ENCODE measurements at regions of chr3 and their contacts with region 1.

Region 1: DNA sequence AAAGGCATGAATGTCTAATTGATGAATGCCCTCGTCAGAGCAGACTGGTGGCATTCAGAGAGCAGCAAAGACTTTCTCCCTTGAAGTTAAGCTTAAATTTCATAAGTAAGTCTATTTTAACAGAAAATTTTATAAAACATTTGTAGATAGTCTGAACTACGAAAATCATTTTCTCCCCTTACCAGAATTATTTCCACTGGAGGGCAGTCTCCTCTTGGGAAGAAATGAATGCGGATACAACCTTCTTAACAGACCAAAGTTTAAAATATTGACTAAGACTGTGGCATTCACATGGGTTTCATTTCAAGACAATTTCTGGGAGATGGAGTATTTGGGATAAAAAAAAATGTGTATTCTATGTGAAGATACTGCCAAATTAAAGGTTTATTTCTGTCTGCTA is 669.0 kb downstream of the FHIT start:
- DNase-seq: peak in 1 of 2 experiments; percentile 28
- H3K4me3 ChIP-seq: no peak overlapping the region
- H3K4me3 Mint-ChIP-seq: no peak overlapping the region
- H3K27ac Mint-ChIP-seq: no peak overlapping the region
- H3K4me1 ChIP-seq: peaks cover 3% of the 10 kb centered on the region; the same call in 1 of the 2 replicates
- H3K4me1 Mint-ChIP-seq: peaks cover 9% of the 10 kb centered on the region
- H3K27me3 ChIP-seq: no peaks in the 10 kb centered on the region
- H3K27me3 Mint-ChIP-seq: no peaks in the 10 kb centered on the region
- CTCF ChIP-seq: peak in 1 of 2 experiments; percentile 39

Region 2: GRCh38 chr3:60188803-60189202 is 393.5 kb before region 1 on chr3:
- CTCF ChIA-PET with region 1: no interaction called
- POLR2A ChIA-PET with region 1: no interaction called
- intact Hi-C with region 1: loop called (anchors 10 kb)
- DNase-seq: no peak
- H3K4me3 ChIP-seq: no peak overlapping the region
- H3K4me3 Mint-ChIP-seq: no peak overlapping the region
- H3K27ac Mint-ChIP-seq: no peak overlapping the region
- H3K4me1 ChIP-seq: no peaks in the 10 kb centered on the region
- H3K4me1 Mint-ChIP-seq: no peaks in the 10 kb centered on the region
- H3K27me3 ChIP-seq: no peaks in the 10 kb centered on the region
- H3K27me3 Mint-ChIP-seq: no peaks in the 10 kb centered on the region
- CTCF ChIP-seq: no peak

Region 3: DNA sequence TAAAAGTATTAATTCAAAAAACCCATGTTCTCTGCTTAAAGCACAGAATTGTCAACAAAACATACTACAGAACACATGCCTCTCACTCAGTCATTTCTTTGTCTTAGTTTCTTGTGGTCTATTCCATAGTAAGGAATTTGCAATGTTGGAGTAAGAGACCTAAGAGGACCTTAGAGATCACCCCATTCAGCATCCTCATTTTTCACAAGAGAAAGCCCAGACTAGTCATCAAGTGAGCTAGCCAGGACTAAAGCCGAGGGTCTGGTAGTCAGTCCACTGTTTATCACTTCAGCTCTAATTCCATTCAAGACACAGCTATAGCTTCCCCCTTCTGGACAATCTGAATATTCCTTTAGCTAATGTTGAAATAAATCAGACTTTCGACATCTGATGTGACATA is 67.9 kb after region 1 on chr3:
- CTCF ChIA-PET with region 1: interaction called, 3 read pairs
- POLR2A ChIA-PET with region 1: no interaction called
- intact Hi-C with region 1: loop called (anchors 2 kb)
- DNase-seq: no peak
- H3K4me3 ChIP-seq: no peak overlapping the region
- H3K4me3 Mint-ChIP-seq: no peak overlapping the region
- H3K27ac Mint-ChIP-seq: no peak overlapping the region
- H3K4me1 ChIP-seq: no peaks in the 10 kb centered on the region
- H3K4me1 Mint-ChIP-seq: peaks cover 9% of the 10 kb centered on the region
- H3K27me3 ChIP-seq: no peaks in the 10 kb centered on the region
- H3K27me3 Mint-ChIP-seq: no peaks in the 10 kb centered on the region
- CTCF ChIP-seq: no peak

Region 4: DNA sequence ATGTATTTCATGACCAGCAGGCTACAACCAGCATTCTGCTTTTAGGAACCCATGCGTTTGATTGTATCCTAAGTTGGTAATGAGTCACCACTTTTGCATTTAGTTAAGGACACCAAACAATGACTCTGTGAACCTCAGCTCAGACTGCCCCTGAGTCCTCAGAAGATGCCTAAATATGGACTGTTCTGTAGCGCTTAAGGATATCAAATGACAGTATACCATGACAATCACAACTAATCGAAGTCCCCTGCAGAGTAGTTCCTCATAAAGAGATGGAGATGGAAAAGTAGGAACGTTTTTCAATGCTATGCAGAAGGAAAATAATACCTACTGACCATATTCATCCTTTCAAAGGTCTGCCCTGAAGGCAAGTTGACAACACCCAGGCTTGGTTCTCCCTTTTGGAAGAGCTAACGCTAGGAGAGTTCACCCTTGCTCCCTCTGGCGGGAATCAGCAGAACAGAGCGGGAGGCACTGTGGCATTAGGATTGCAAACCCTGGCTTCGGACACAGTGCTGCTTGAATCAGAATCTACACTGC is 160.4 kb after region 1 on chr3:
- CTCF ChIA-PET with region 1: interaction called, 3 read pairs
- POLR2A ChIA-PET with region 1: no interaction called
- intact Hi-C with region 1: loop called (anchors 1 kb)
- DNase-seq: peak; percentile 38 to 45
- H3K4me3 ChIP-seq: no peak overlapping the region
- H3K4me3 Mint-ChIP-seq: no peak overlapping the region
- H3K27ac Mint-ChIP-seq: no peak overlapping the region
- H3K4me1 ChIP-seq: peaks cover 28% of the 10 kb centered on the region
- H3K4me1 Mint-ChIP-seq: peaks cover 18% of the 10 kb centered on the region
- H3K27me3 ChIP-seq: no peaks in the 10 kb centered on the region
- H3K27me3 Mint-ChIP-seq: no peaks in the 10 kb centered on the region
- CTCF ChIP-seq: peak; percentile 29 to 33

Region 5: GRCh38 chr3:60841363-60841762 is 259.1 kb after region 1 on chr3:
- CTCF ChIA-PET with region 1: no interaction called
- POLR2A ChIA-PET with region 1: no interaction called
- intact Hi-C with region 1: loop called (anchors 2 kb)
- DNase-seq: peak; percentile 66 to 69
- H3K4me3 ChIP-seq: no peak overlapping the region
- H3K4me3 Mint-ChIP-seq: no peak overlapping the region
- H3K27ac Mint-ChIP-seq: no peak overlapping the region
- H3K4me1 ChIP-seq: peaks cover 5% of the 10 kb centered on the region; the same call in 1 of the 2 replicates
- H3K4me1 Mint-ChIP-seq: no peaks in the 10 kb centered on the region
- H3K27me3 ChIP-seq: no peaks in the 10 kb centered on the region
- H3K27me3 Mint-ChIP-seq: no peaks in the 10 kb centered on the region
- CTCF ChIP-seq: no peak

Region 6: DNA sequence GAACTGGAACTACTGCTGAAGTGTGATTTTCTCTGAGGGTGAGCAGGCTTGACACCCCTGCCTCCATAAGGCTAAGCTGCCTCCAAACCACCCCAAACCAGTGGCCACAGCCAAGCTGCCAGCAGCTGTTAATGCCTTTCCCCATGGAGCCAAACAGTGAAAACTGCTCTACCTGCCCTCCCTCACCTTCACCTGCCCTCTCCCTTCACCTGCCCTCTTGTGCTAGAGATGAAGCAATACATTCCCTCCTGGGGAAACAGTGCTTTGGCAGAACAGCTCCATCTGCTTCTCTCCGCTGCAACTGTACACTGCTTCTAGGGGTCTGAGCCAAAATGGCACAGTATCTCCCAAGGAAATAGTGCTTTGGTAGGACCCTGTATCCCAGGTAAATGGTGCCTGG is 294.9 kb after region 1 on chr3:
- CTCF ChIA-PET with region 1: no interaction called
- POLR2A ChIA-PET with region 1: no interaction called
- intact Hi-C with region 1: loop called (anchors 1 kb)
- DNase-seq: peak in 1 of 2 experiments; percentile 15
- H3K4me3 ChIP-seq: no peak overlapping the region
- H3K4me3 Mint-ChIP-seq: no peak overlapping the region
- H3K27ac Mint-ChIP-seq: peak overlapping the region; percentile 5
- H3K4me1 ChIP-seq: no peaks in the 10 kb centered on the region
- H3K4me1 Mint-ChIP-seq: no peaks in the 10 kb centered on the region
- H3K27me3 ChIP-seq: no peaks in the 10 kb centered on the region
- H3K27me3 Mint-ChIP-seq: peaks cover 4% of the 10 kb centered on the region
- CTCF ChIP-seq: no peak

Region 7: GRCh38 chr3:61371123-61371522 is 788.8 kb after region 1 on chr3:
- CTCF ChIA-PET with region 1: no interaction called
- POLR2A ChIA-PET with region 1: no interaction called
- intact Hi-C with region 1: loop called (anchors 1 kb)
- DNase-seq: peak in 1 of 2 experiments; percentile 46
- H3K4me3 ChIP-seq: no peak overlapping the region
- H3K4me3 Mint-ChIP-seq: no peak overlapping the region
- H3K27ac Mint-ChIP-seq: no peak overlapping the region
- H3K4me1 ChIP-seq: no peaks in the 10 kb centered on the region
- H3K4me1 Mint-ChIP-seq: no peaks in the 10 kb centered on the region
- H3K27me3 ChIP-seq: no peaks in the 10 kb centered on the region
- H3K27me3 Mint-ChIP-seq: no peaks in the 10 kb centered on the region
- CTCF ChIP-seq: peak; percentile 67 to 76